ENCODE measurements at regions of chr2 and their contacts with region 1.

Region 1: GRCh38 chr2:203782262-203782976 is 76.0 kb downstream of the CD28 start:
- DNase-seq: peak; percentile 55
- CTCF ChIP-seq: peak; percentile 70

Region 2: GRCh38 chr2:203804070-203804469 is 21.7 kb after region 1 on chr2:
- CTCF ChIA-PET with region 1: interaction called, 15 read pairs
- POLR2A ChIA-PET with region 1: no interaction called
- DNase-seq: no peak
- CTCF ChIP-seq: no peak